ENCODE measurements at regions of chr3 and their contacts with region 1.

Region 1: DNA sequence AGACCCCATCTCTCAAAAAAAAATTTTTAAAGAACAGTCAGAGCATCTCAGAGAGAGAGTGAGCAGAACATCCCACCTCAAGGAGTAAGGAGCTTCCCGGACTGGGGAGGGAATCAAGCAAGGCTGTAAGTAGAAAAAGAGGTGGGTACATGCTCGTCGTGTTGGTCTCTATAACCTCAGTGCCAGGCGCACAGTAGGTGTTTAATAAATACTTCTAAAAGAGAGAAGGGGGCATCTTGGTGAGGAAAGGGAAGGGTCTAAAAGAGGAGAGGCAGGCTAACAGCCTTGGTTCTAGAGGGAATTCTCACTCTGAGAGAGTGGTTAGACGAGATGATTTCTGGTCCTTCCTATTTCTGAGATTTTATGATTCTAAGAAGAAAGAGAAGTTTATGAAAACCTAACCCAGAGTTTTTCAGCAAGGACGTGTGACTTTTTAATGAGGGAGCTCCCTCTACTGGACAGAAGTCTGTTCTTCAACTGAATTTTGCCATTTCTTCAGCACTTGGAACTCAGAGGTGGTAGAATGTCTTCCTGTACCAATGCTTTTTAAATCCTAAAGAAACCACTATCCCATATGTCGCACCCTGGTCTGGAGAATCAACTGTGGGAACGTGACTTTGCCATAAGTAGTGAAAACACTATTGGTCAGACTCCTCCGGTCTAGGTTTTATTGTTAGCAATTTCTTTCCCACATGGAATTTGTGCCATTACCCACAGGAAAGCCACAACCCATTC is 199.7 kb upstream of the LMCD1 start:
- DNase-seq: no peak
- H3K4me3 ChIP-seq: no peak overlapping the region
- H3K27ac ChIP-seq: no peak overlapping the region
- H3K4me1 ChIP-seq: no peaks in the 10 kb centered on the region
- H3K27me3 ChIP-seq: no peaks in the 10 kb centered on the region
- CTCF ChIP-seq: peak in 3 of 4 experiments; percentile 54 to 59 (median 55)
- POLR2A ChIP-seq: no peak

Region 2: DNA sequence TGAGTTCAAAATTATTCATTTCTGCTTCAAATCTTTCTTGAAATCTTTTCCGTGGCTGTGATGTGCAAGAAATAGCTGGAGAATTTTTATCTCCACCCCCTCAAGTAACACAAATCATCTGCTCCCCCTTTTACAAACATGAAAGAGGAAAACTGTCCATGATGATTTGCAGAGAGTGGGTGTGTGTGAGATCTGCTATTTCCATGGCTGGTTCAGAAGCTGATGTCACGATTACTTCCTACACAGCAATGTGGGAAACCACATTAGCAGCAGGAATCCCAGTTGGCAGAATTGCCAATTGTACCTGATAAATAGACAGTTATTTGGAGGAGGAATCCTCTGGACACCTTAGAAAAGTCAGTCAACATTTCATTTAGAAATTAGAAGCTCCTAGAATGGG is 1516.2 kb before region 1 on chr3:
- intact Hi-C with region 1: loop called (anchors 10 kb)
- DNase-seq: no peak
- H3K4me3 ChIP-seq: no peak overlapping the region
- H3K27ac ChIP-seq: no peak overlapping the region
- H3K4me1 ChIP-seq: no peaks in the 10 kb centered on the region
- H3K27me3 ChIP-seq: no peaks in the 10 kb centered on the region
- CTCF ChIP-seq: no peak
- POLR2A ChIP-seq: no peak

Region 3: GRCh38 chr3:8186213-8186612 is 115.7 kb before region 1 on chr3:
- intact Hi-C with region 1: no loop called
- DNase-seq: no peak
- H3K4me3 ChIP-seq: no peak overlapping the region
- H3K27ac ChIP-seq: no peak overlapping the region
- H3K4me1 ChIP-seq: no peaks in the 10 kb centered on the region
- H3K27me3 ChIP-seq: no peaks in the 10 kb centered on the region
- CTCF ChIP-seq: no peak
- POLR2A ChIP-seq: no peak